ENCODE measurements at regions of chr6 and their contacts with region 1.

Region 1: GRCh38 chr6:36027501-36028087 is at the start of gene MAPK14:
- DNase-seq: peak; percentile 91 to 100 (median 99)
- ATAC-seq: peak; percentile 95
- H3K4me3 ChIP-seq: peak within 1 kb of the TSS; percentile 63
- H3K4me3 Mint-ChIP-seq: peak within 1 kb of the TSS; percentile 91 to 100 (median 94)
- H3K27ac ChIP-seq: peak within 1 kb of the TSS; percentile 85
- H3K27ac Mint-ChIP-seq: peak within 1 kb of the TSS; percentile 87 to 95 (median 92)
- H3K4me1 ChIP-seq: peaks cover 16 to 23% of the 10 kb centered on the region in 2 donors
- H3K4me1 Mint-ChIP-seq: peaks cover 27 to 55% (median 43%) of the 10 kb centered on the region in 7 donors
- H3K27me3 ChIP-seq: no peaks in the 10 kb centered on the region
- H3K27me3 Mint-ChIP-seq: peaks cover 19 to 35% (median 24%) of the 10 kb centered on the region in 5 donors
- total RNA-seq, gene MAPK14: 47.2 to 81.0 (median 62.6) TPM

Region 2: DNA sequence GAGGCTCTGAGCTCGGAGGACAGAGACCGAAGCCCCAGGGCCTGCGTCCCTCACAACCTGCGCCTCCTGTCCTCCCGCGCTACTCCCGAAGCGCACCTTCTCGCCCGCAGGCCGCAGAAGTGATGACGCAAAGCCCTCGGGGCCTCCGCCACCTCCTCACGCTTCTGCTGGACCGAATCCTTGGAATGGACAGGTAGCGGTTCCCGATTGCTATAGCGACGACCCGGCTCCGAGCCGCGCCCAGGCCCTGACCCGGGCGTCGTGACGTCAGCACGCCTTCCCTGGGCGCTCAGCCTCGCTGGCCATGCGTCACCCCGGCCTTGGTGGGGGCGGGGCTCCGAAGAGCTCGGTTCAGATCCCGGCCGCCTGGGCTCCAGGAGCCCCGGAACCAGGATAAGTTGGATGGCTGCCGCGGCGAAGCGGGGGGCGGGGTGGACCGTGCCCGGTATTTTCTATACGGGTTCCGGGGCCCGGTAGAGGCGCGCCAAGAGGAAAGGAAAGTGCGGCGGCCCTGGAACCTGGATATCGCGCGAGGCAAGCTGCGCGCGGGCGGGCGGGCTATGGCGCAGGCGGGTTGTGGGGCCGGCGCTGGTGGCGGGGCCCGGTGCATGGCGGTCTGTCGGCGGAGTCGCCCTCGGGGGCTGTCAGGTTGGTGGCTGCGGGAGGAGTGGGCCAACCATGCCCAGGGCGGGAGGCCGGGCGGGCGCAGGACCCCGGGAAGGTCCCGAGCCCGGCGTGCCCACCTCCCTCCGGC is 768.2 kb before region 1 on chr6 and contains the start of gene ZNF76:
- CTCF ChIA-PET with region 1: no interaction called
- POLR2A ChIA-PET with region 1: no interaction called
- intact Hi-C with region 1: loop called in 1 of 2 experiments (anchors 1 kb)
- DNase-seq: peak; percentile 89 to 93 (median 92)
- ATAC-seq: peak; percentile 88
- H3K4me3 ChIP-seq: peak within 1 kb of the TSS; percentile 65
- H3K4me3 Mint-ChIP-seq: peak within 1 kb of the TSS; percentile 85 to 99 (median 97)
- H3K27ac ChIP-seq: peak within 1 kb of the TSS; percentile 95
- H3K27ac Mint-ChIP-seq: peak within 1 kb of the TSS; percentile 89 to 99 (median 97)
- H3K4me1 ChIP-seq: peaks cover 15 to 17% of the 10 kb centered on the region in 2 donors
- H3K4me1 Mint-ChIP-seq: peaks cover 37 to 64% (median 50%) of the 10 kb centered on the region in 7 donors
- H3K27me3 ChIP-seq: no peaks in the 10 kb centered on the region
- H3K27me3 Mint-ChIP-seq: no peaks in the 10 kb centered on the region
- total RNA-seq, gene ZNF76: 44.4 to 110 (median 77.2) TPM

Region 3: GRCh38 chr6:36094753-36095496 is 67.3 kb after region 1 on chr6:
- CTCF ChIA-PET with region 1: interaction called, 104 read pairs
- POLR2A ChIA-PET with region 1: interaction called, 56 read pairs
- intact Hi-C with region 1: loop called (anchors 1 kb)
- DNase-seq: peak; percentile 61 to 82 (median 77)
- ATAC-seq: peak; percentile 88
- H3K4me3 ChIP-seq: no peak overlapping the region
- H3K4me3 Mint-ChIP-seq: no peak overlapping the region
- H3K27ac ChIP-seq: peak overlapping the region; percentile 62
- H3K27ac Mint-ChIP-seq: peak overlapping the region in 8 of 9 donors; percentile 46 to 85 (median 78)
- H3K4me1 ChIP-seq: peaks cover 15 to 21% of the 10 kb centered on the region in 2 donors
- H3K4me1 Mint-ChIP-seq: peaks cover 14 to 48% (median 40%) of the 10 kb centered on the region in 7 donors
- H3K27me3 ChIP-seq: no peaks in the 10 kb centered on the region
- H3K27me3 Mint-ChIP-seq: no peaks in the 10 kb centered on the region

Region 4: DNA sequence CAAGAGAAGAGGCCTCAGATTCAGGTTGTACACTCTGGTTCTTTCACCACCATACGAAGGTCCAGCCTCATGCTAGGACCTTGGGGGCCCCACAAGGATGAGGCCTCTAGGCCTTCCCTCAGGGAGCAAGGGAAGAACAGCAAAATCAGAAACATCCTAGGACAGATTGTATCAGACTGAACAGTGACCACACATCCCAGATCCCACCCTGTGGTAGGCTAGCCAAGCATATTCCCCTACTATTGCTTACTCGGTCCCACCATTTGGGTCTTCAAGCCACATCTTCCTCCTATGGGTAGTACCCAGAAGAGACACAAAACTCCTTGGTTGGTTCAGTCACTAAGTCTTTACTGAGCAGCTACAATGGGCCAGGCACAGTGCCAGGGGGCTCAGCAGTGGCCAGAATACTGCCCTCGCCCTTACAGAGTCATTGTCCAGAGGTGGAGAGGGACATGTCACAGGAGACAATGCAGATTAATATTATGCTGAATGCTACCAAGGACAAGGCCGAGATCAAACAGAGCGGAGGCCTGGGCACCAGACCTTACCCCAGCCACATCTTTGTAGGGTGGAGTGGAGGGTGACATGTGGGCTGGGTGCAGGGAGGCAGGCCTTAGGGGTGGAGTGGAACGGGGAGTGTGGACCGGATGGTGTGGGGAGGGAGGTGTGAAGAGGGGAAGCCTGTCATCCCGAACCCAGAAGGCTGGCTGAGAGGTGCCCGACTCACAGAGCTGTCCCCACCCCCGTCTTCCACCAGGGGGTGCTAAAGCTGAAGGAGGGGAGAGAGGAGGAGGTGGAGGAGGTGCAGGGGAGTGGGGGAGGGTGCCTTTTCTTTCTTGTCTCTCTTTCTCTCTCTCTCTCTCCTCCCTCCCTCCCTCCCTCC is 95.9 kb after region 1 on chr6:
- CTCF ChIA-PET with region 1: interaction called, 16 read pairs
- POLR2A ChIA-PET with region 1: interaction called, 39 read pairs
- intact Hi-C with region 1: loop called (anchors 1 kb)
- DNase-seq: peak; percentile 74 to 96 (median 89)
- ATAC-seq: peak; percentile 83
- H3K4me3 ChIP-seq: peak overlapping the region; percentile 11
- H3K4me3 Mint-ChIP-seq: peak overlapping the region; percentile 36 to 99 (median 60)
- H3K27ac ChIP-seq: peak overlapping the region; percentile 90
- H3K27ac Mint-ChIP-seq: peak overlapping the region; percentile 94 to 100 (median 99)
- H3K4me1 ChIP-seq: peaks cover 64 to 75% of the 10 kb centered on the region in 2 donors
- H3K4me1 Mint-ChIP-seq: peaks cover 63 to 98% (median 87%) of the 10 kb centered on the region in 7 donors
- H3K27me3 ChIP-seq: no peaks in the 10 kb centered on the region
- H3K27me3 Mint-ChIP-seq: no peaks in the 10 kb centered on the region

Region 5: GRCh38 chr6:36302227-36302976 is 274.8 kb after region 1 on chr6:
- CTCF ChIA-PET with region 1: interaction called, 4 read pairs
- POLR2A ChIA-PET with region 1: interaction called, 3 read pairs
- intact Hi-C with region 1: loop called (anchors 1 kb)
- DNase-seq: peak; percentile 74 to 92 (median 88)
- ATAC-seq: peak; percentile 100
- H3K4me3 ChIP-seq: no peak overlapping the region
- H3K4me3 Mint-ChIP-seq: no peak overlapping the region
- H3K27ac ChIP-seq: no peak overlapping the region
- H3K27ac Mint-ChIP-seq: peak overlapping the region in 4 of 9 donors; percentile 29 to 59 (median 48)
- H3K4me1 ChIP-seq: no peaks in the 10 kb centered on the region
- H3K4me1 Mint-ChIP-seq: peaks cover 0 to 8% (median 6%) of the 10 kb centered on the region in 7 donors
- H3K27me3 ChIP-seq: no peaks in the 10 kb centered on the region
- H3K27me3 Mint-ChIP-seq: peaks cover 0 to 29% (median 5%) of the 10 kb centered on the region in 5 donors

Region 6: GRCh38 chr6:36678518-36679027 is 651.0 kb after region 1 on chr6 and contains the start of gene CDKN1A:
- CTCF ChIA-PET with region 1: no interaction called
- POLR2A ChIA-PET with region 1: no interaction called
- intact Hi-C with region 1: loop called in 1 of 2 experiments (anchors 2 kb)
- DNase-seq: peak; percentile 33 to 84 (median 51)
- ATAC-seq: peak; percentile 64
- H3K4me3 ChIP-seq: peak within 1 kb of the TSS; percentile 62
- H3K4me3 Mint-ChIP-seq: peak within 1 kb of the TSS; percentile 87 to 98 (median 94)
- H3K27ac ChIP-seq: peak within 1 kb of the TSS; percentile 66
- H3K27ac Mint-ChIP-seq: peak within 1 kb of the TSS; percentile 73 to 96 (median 87)
- H3K4me1 ChIP-seq: peaks cover 19 to 29% of the 10 kb centered on the region in 2 donors
- H3K4me1 Mint-ChIP-seq: peaks cover 16 to 65% (median 30%) of the 10 kb centered on the region in 7 donors
- H3K27me3 ChIP-seq: no peaks in the 10 kb centered on the region
- H3K27me3 Mint-ChIP-seq: peaks cover 0 to 5% (median 0%) of the 10 kb centered on the region in 5 donors
- total RNA-seq, gene CDKN1A: 1.5 to 156 (median 53.6) TPM

Measured in naive thymus-derived CD4-positive, alpha-beta T cell (primary cell).